Heart right ventricle (tissue), 16 donors: ENCODE measurements at regions of chr17 and their contacts with region 1.

Region 1: GRCh38 chr17:8189711-8190477 is at the start of gene BORCS6:
- DNase-seq: peak; percentile 96 to 98
- ATAC-seq: peak; percentile 70 to 83 (median 76)
- H3K4me3 ChIP-seq: peak within 1 kb of the TSS; percentile 29 to 90 (median 82)
- H3K27ac ChIP-seq: peak within 1 kb of the TSS; percentile 87 to 99 (median 94)
- H3K4me1 ChIP-seq: peaks cover 11 to 65% (median 42%) of the 10 kb centered on the region in 9 donors
- H3K27me3 ChIP-seq: no peaks in the 10 kb centered on the region
- CTCF ChIP-seq: peak in 4 of 9 donors; percentile 10 to 33 (median 22)
- total RNA-seq, gene BORCS6: 5.3 to 9.4 (median 7.7) TPM

Region 2: DNA sequence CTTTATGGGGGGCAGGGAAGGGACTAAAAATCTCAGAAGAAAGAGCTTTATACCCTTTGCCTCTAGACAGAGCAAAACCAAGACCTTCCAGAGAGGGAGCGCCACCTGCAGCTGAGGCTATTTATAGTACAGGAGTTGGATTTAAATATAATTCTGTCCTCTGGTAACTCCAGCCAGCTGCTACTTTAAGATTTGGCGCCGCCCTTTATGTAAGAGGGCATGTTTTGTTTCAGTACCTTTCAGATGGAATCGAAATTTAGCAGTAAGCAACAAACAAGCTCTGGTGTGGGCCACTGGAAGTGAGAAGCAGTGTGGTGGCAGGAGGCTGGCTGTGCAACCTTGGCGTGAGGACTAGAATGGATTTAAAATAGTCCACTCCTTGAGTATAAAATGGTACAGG is 192.7 kb before region 1 on chr17:
- intact Hi-C with region 1: no loop called
- DNase-seq: peak; percentile 25 to 62
- ATAC-seq: peak; percentile 61 to 96 (median 90)
- H3K4me3 ChIP-seq: no peak overlapping the region
- H3K27ac ChIP-seq: peak overlapping the region in 8 of 10 donors; percentile 9 to 74 (median 50)
- H3K4me1 ChIP-seq: peaks cover 0 to 17% (median 7%) of the 10 kb centered on the region in 9 donors
- H3K27me3 ChIP-seq: peaks cover 4 to 36% (median 23%) of the 10 kb centered on the region in 7 donors
- CTCF ChIP-seq: peak in 8 of 9 donors; percentile 15 to 69 (median 42)

Region 3: GRCh38 chr17:8125157-8125946 is 64.5 kb before region 1 on chr17:
- intact Hi-C with region 1: loop called in 6 of 10 experiments (anchors 1 to 10 kb)
- DNase-seq: peak; percentile 76 to 86
- ATAC-seq: peak; percentile 30 to 71 (median 60)
- H3K4me3 ChIP-seq: peak overlapping the region; percentile 40 to 91 (median 70)
- H3K27ac ChIP-seq: peak overlapping the region in 8 of 10 donors; percentile 51 to 82 (median 67)
- H3K4me1 ChIP-seq: peaks cover 27 to 70% (median 67%) of the 10 kb centered on the region in 9 donors
- H3K27me3 ChIP-seq: peaks cover 0 to 94% (median 17%) of the 10 kb centered on the region in 7 donors
- CTCF ChIP-seq: no peak

Region 4: DNA sequence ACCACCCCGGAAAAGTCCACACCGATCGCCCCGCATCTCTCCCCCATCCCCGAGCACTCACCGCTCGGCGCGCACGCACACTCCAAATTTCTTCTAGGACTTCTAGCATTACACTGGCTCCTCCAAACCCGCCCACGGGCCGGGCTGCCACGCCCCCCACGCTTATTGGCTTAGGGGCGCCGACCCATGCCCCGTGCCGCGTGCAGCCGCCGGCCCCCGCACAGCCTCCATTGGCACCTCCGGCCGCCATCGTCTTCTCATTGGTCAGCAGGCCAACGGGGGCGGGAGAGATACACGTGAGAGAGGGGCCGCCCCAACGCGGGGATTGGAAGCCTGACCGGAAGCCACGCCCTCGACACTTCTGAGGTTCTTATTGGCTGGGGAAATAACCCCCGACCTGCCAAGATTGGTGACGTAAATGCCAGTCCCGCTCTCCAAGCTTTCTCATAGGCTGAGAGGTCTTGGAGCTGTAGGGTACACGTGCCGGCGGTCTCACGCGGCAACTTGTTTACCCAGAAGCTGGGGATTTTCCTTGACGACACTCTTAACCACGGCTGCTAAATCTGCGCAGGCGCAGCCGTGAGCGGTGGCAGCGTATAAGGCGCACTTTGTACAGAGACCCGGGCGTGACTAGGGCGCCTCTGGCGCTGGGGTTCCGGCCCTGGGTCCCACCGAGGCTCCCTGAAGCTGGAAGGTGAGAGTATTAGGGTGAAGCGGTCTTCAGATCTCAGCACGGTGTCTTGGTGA is 33.5 kb before region 1 on chr17:
- intact Hi-C with region 1: loop called in 1 of 10 experiments (anchors 2 kb)
- DNase-seq: peak; percentile 100
- ATAC-seq: peak; percentile 65 to 75 (median 68)
- H3K4me3 ChIP-seq: peak overlapping the region; percentile 66 to 91 (median 81)
- H3K27ac ChIP-seq: peak overlapping the region; percentile 97 to 100 (median 100)
- H3K4me1 ChIP-seq: peaks cover 19 to 91% (median 51%) of the 10 kb centered on the region in 9 donors
- H3K27me3 ChIP-seq: no peaks in the 10 kb centered on the region
- CTCF ChIP-seq: peak in 4 of 9 donors; percentile 12 to 42 (median 28)

Region 5: GRCh38 chr17:8204761-8205555 is 15.1 kb after region 1 on chr17:
- intact Hi-C with region 1: loop called in 1 of 10 experiments (anchors 1 kb)
- DNase-seq: no peak
- ATAC-seq: no peak
- H3K4me3 ChIP-seq: no peak overlapping the region
- H3K27ac ChIP-seq: no peak overlapping the region
- H3K4me1 ChIP-seq: peaks cover under 1 to 14% (median 3%) of the 10 kb centered on the region in 9 donors
- H3K27me3 ChIP-seq: no peaks in the 10 kb centered on the region
- CTCF ChIP-seq: no peak

Region 6: DNA sequence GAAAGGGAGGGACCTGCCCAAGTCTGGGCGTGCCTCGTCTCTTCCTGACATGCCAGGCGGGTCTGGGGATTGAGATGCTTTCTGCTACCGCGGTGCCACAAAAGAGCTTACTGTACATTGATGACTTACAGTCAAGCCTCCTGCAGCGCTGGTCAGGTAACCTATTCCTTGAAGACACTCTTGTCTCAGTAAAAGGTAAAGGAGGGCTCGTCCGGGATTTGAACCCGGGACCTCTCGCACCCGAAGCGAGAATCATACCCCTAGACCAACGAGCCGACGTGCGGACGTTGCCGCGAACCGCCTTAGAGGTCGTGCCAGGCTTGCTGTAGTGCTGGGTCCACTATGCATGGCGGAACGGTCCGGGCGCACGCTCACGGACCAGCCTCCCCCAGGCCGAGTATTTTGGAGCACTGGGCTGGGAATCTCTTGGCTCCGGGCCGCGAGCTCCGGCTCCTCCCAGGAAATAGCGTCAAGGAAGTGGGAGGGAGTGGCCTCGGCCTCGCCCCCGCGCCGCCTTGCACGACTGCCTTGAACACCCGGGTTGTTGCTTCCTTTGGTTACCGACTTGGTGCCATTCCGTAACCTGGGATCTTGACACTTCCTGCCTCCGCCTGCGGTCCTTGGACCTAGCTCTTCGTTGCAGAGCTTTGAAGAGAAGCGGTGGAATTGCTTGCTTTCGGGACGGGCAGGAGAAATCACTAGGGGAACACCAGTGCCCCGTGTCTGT is 32.9 kb after region 1 on chr17:
- intact Hi-C with region 1: loop called in 8 of 10 experiments (anchors 1 to 5 kb)
- DNase-seq: peak; percentile 95
- ATAC-seq: peak; percentile 72 to 85 (median 79)
- H3K4me3 ChIP-seq: peak overlapping the region; percentile 45 to 92 (median 66)
- H3K27ac ChIP-seq: peak overlapping the region; percentile 94 to 99 (median 97)
- H3K4me1 ChIP-seq: peaks cover 7 to 68% (median 18%) of the 10 kb centered on the region in 9 donors
- H3K27me3 ChIP-seq: no peaks in the 10 kb centered on the region
- CTCF ChIP-seq: no peak

Region 7: GRCh38 chr17:8294814-8295316 is 105.0 kb after region 1 on chr17:
- intact Hi-C with region 1: loop called in 2 of 10 experiments (anchors 5 to 10 kb)
- DNase-seq: no peak
- ATAC-seq: peak; percentile 1 to 27 (median 6)
- H3K4me3 ChIP-seq: peak overlapping the region; percentile 10 to 87 (median 65)
- H3K27ac ChIP-seq: peak overlapping the region; percentile 81 to 99 (median 89)
- H3K4me1 ChIP-seq: peaks cover 8 to 27% (median 13%) of the 10 kb centered on the region in 9 donors
- H3K27me3 ChIP-seq: no peaks in the 10 kb centered on the region
- CTCF ChIP-seq: no peak